ENCODE measurements at regions of chr16 and their contacts with region 1.

Region 1: GRCh38 chr16:29995911-29996772 is at the start of gene INO80E:
- DNase-seq: peak in 1 of 2 donors; percentile 96
- H3K4me3 ChIP-seq: peak within 1 kb of the TSS; percentile 79 to 91
- H3K27ac ChIP-seq: peak within 1 kb of the TSS; percentile 89
- H3K4me1 ChIP-seq: peaks cover 24% of the 10 kb centered on the region
- H3K27me3 ChIP-seq: no peaks in the 10 kb centered on the region
- CTCF ChIP-seq: no peak
- POLR2A ChIP-seq: no peak
- total RNA-seq, gene INO80E: 32.7 TPM

Region 2: DNA sequence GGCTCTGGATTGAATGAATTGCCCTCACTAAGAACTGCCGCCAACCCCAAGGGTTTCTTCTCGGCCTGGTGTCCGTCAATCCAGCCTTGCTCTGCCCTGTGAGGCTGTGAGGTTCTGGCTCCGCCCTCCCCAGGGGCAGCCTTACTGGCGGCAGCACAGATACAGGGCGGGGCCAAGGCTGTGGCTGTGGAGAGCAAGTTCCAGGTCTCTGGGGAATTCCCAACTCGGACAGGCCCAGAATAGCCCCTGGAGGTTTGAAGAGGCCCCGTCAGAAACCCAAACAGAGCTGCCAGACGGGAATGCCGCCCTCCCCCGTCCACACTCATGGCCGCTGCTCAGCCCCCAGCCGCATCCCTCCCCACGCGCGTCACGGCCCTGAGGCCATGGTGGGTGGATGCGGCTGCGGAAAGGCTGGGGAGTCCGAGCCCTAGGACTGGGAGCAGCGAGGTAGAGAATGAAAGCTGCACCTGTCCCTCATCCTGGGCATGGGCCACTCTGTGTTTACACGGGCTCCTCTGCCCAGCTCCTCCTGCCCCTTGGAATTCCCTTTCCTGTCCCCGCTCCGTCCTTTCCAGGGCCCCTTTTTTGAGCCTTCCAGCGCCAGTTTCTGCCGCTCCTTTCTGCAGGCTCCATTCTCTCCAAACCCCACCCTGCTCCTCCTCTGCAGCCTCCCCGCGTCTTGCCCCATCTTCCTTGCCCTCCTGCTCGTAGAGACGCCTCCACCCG is 184.8 kb before region 1 on chr16:
- intact Hi-C with region 1: loop called (anchors 5 kb)
- DNase-seq: no peak
- H3K4me3 ChIP-seq: peak overlapping the region; percentile 57 to 74
- H3K27ac ChIP-seq: peak overlapping the region; percentile 96
- H3K4me1 ChIP-seq: peaks cover 81% of the 10 kb centered on the region
- H3K27me3 ChIP-seq: no peaks in the 10 kb centered on the region
- CTCF ChIP-seq: no peak
- POLR2A ChIP-seq: peak in 1 of 2 donors; percentile 42

Region 3: GRCh38 chr16:29862884-29863668 is 133.1 kb before region 1 on chr16 and contains the start of gene CDIPT:
- intact Hi-C with region 1: no loop called
- DNase-seq: peak in 1 of 2 donors; percentile 95
- H3K4me3 ChIP-seq: peak within 1 kb of the TSS; percentile 84 to 100
- H3K27ac ChIP-seq: peak within 1 kb of the TSS; percentile 91
- H3K4me1 ChIP-seq: peaks cover 25% of the 10 kb centered on the region
- H3K27me3 ChIP-seq: no peaks in the 10 kb centered on the region
- CTCF ChIP-seq: peak; percentile 3 to 87 (median 59)
- POLR2A ChIP-seq: peak in 1 of 2 donors; percentile 11
- total RNA-seq, gene CDIPT: 89.4 TPM

Region 4: GRCh38 chr16:29973384-29974246 is 22.5 kb before region 1 on chr16 and contains the start of gene TAOK2:
- intact Hi-C with region 1: loop called (anchors 2 kb)
- DNase-seq: peak in 1 of 2 donors; percentile 99
- H3K4me3 ChIP-seq: peak within 1 kb of the TSS; percentile 58 to 80
- H3K27ac ChIP-seq: peak within 1 kb of the TSS; percentile 80
- H3K4me1 ChIP-seq: peaks cover 39% of the 10 kb centered on the region
- H3K27me3 ChIP-seq: no peaks in the 10 kb centered on the region
- CTCF ChIP-seq: peak in 1 of 3 experiments; percentile 7
- POLR2A ChIP-seq: peak in 1 of 2 donors; percentile 85
- total RNA-seq, gene TAOK2: 33.1 TPM

Measured in vagina (tissue), 2 donors.